ENCODE measurements at regions of chr19 and their contacts with region 1.

Region 1: DNA sequence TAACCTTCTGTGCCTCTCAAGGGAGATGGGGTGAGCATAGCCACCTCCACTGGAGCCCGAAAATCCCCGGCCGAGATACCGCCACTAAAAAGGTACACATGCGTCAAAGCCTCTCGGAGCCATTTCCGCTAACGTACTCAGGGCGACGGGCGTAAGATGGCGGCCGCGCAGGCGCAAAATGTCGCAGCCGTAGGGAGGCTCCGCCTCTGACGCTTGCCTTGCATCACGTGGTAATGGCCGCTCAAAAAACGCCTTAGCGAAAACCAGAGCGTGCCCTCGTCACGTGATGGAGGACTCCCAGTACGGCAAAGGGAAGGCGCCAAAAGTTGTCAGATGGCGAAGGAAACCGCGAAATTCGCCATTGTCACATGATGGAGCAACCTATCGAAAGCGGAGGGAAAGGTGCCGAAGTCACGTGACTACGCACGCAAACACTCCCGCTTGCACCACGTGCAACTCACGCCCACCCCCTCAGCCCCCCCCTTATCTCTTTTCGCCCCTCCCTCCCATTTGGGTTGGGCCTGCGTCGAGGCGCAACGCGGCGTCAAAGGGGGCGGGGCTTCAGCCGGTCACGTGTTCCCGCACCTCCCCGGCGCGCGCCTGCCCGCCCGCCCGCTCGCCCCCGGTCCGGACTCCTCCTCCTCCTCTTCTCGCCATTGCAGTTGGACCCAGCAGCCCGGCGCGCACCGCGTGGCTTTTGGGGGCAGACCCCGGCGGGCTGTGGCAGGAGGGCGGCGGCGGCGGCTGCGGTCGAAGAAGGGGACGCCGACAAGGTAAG is at the start of gene ILF3:
- DNase-seq: peak; percentile 100
- H3K4me3 Mint-ChIP-seq: peak within 1 kb of the TSS; percentile 90
- H3K27ac Mint-ChIP-seq: peak within 1 kb of the TSS; percentile 96
- H3K4me1 Mint-ChIP-seq: peaks cover 35% of the 10 kb centered on the region
- H3K27me3 Mint-ChIP-seq: no peaks in the 10 kb centered on the region
- total RNA-seq, gene ILF3: 355 to 357 TPM

Region 2: GRCh38 chr19:10502524-10503001 is 151.3 kb before region 1 on chr19:
- CTCF ChIA-PET with region 1: no interaction called
- POLR2A ChIA-PET with region 1: no interaction called
- intact Hi-C with region 1: loop called (anchors 2 kb)
- DNase-seq: peak; percentile 94
- H3K4me3 Mint-ChIP-seq: peak overlapping the region; percentile 90
- H3K27ac Mint-ChIP-seq: peak overlapping the region; percentile 84
- H3K4me1 Mint-ChIP-seq: peaks cover 35% of the 10 kb centered on the region
- H3K27me3 Mint-ChIP-seq: no peaks in the 10 kb centered on the region

Region 3: GRCh38 chr19:10602330-10603083 is 51.4 kb before region 1 on chr19:
- CTCF ChIA-PET with region 1: no interaction called
- POLR2A ChIA-PET with region 1: interaction called, 7 read pairs
- intact Hi-C with region 1: loop called (anchors 2 kb)
- DNase-seq: peak; percentile 94
- H3K4me3 Mint-ChIP-seq: peak overlapping the region; percentile 88
- H3K27ac Mint-ChIP-seq: peak overlapping the region; percentile 98
- H3K4me1 Mint-ChIP-seq: peaks cover 18% of the 10 kb centered on the region
- H3K27me3 Mint-ChIP-seq: no peaks in the 10 kb centered on the region

Region 4: GRCh38 chr19:10631874-10632273 is 22.0 kb before region 1 on chr19:
- CTCF ChIA-PET with region 1: no interaction called
- POLR2A ChIA-PET with region 1: no interaction called
- intact Hi-C with region 1: no loop called
- DNase-seq: no peak
- H3K4me3 Mint-ChIP-seq: no peak overlapping the region
- H3K27ac Mint-ChIP-seq: no peak overlapping the region
- H3K4me1 Mint-ChIP-seq: no peaks in the 10 kb centered on the region
- H3K27me3 Mint-ChIP-seq: no peaks in the 10 kb centered on the region

Region 5: GRCh38 chr19:10760273-10760944 is 106.5 kb after region 1 on chr19:
- CTCF ChIA-PET with region 1: no interaction called
- POLR2A ChIA-PET with region 1: no interaction called
- intact Hi-C with region 1: loop called (anchors 5 kb)
- DNase-seq: peak; percentile 71
- H3K4me3 Mint-ChIP-seq: peak overlapping the region; percentile 71
- H3K27ac Mint-ChIP-seq: peak overlapping the region; percentile 86
- H3K4me1 Mint-ChIP-seq: peaks cover 83% of the 10 kb centered on the region
- H3K27me3 Mint-ChIP-seq: no peaks in the 10 kb centered on the region

Region 6: GRCh38 chr19:10960314-10961072 is 306.6 kb after region 1 on chr19 and contains the start of gene SMARCA4:
- CTCF ChIA-PET with region 1: no interaction called
- POLR2A ChIA-PET with region 1: no interaction called
- intact Hi-C with region 1: loop called (anchors 1 kb)
- DNase-seq: peak; percentile 98
- H3K4me3 Mint-ChIP-seq: peak within 1 kb of the TSS; percentile 89
- H3K27ac Mint-ChIP-seq: peak within 1 kb of the TSS; percentile 86
- H3K4me1 Mint-ChIP-seq: peaks cover 44% of the 10 kb centered on the region
- H3K27me3 Mint-ChIP-seq: no peaks in the 10 kb centered on the region
- total RNA-seq, gene SMARCA4: 97.8 to 101 TPM